Astrocyte of the spinal cord (primary cell): ENCODE measurements at regions of chr20 and their contacts with region 1.

Region 1: GRCh38 chr20:17431621-17432364 is 99.4 kb downstream of the BFSP1 start:
- DNase-seq: peak; percentile 30
- H3K4me3 ChIP-seq: no peak overlapping the region
- CTCF ChIP-seq: peak; percentile 90

Region 2: GRCh38 chr20:16801919-16802911 is 629.6 kb before region 1 on chr20:
- in situ Hi-C with region 1: loop called (anchors 25 kb)
- DNase-seq: peak; percentile 58
- H3K4me3 ChIP-seq: no peak overlapping the region
- CTCF ChIP-seq: peak; percentile 85

Region 3: DNA sequence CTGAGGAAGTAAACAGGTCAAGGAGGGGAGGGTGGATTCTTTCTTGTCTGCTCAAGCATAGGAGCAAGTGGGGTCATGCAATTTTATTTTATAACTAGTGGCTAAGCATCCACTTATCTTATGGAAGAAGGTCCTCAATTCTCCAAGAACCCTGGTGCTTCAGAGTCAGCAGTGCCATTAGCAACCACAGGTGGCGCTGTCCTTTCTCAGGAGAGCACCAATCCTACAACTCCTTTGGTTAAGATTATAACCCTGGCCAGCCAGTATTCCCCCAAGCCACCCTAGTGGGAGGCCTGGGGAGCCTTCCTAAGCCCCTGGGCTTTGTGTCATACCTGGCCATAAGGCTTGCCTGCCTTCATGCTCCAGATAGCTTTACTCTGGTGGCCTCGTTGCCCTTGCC is 144.3 kb before region 1 on chr20:
- in situ Hi-C with region 1: no loop called
- DNase-seq: no peak
- H3K4me3 ChIP-seq: no peak overlapping the region
- CTCF ChIP-seq: no peak

Region 4: GRCh38 chr20:18032977-18033892 is 601.4 kb after region 1 on chr20:
- in situ Hi-C with region 1: no loop called
- DNase-seq: no peak
- H3K4me3 ChIP-seq: no peak overlapping the region
- CTCF ChIP-seq: no peak